GM12878 (cell line): ENCODE measurements at regions of chr7 and their contacts with region 1.

Region 1: GRCh38 chr7:17506095-17506494 is 207.6 kb downstream of the AHR start:
- DNase-seq: peak; percentile 66
- ATAC-seq: peak; percentile 78
- H3K4me3 ChIP-seq: no peak overlapping the region
- H3K27ac ChIP-seq: no peak overlapping the region
- H3K4me1 ChIP-seq: no peaks in the 10 kb centered on the region
- H3K27me3 ChIP-seq: no peaks in the 10 kb centered on the region
- CTCF ChIP-seq: no peak
- EP300 ChIP-seq: peak; percentile 90 to 92
- POLR2A ChIP-seq: no peak
- RAD21 ChIP-seq: no peak

Region 2: GRCh38 chr7:17492437-17492836 is 13.7 kb before region 1 on chr7:
- CTCF ChIA-PET with region 1: interaction called, 6 read pairs
- POLR2A ChIA-PET with region 1: interaction called, 5 read pairs
- RAD21 ChIA-PET with region 1: interaction called, 4 read pairs
- SMC1A ChIA-PET with region 1: interaction called, 14 read pairs
- in situ Hi-C with region 1: no loop called
- intact Hi-C with region 1: no loop called
- DNase-seq: peak; percentile 41
- ATAC-seq: peak; percentile 83
- H3K4me3 ChIP-seq: no peak overlapping the region
- H3K27ac ChIP-seq: no peak overlapping the region
- H3K4me1 ChIP-seq: no peaks in the 10 kb centered on the region
- H3K27me3 ChIP-seq: no peaks in the 10 kb centered on the region
- CTCF ChIP-seq: no peak
- EP300 ChIP-seq: peak; percentile 77 to 95
- POLR2A ChIP-seq: no peak
- RAD21 ChIP-seq: no peak